Posterior vena cava (tissue), 2 donors: ENCODE measurements at regions of chr20 and their contacts with region 1.

Region 1: DNA sequence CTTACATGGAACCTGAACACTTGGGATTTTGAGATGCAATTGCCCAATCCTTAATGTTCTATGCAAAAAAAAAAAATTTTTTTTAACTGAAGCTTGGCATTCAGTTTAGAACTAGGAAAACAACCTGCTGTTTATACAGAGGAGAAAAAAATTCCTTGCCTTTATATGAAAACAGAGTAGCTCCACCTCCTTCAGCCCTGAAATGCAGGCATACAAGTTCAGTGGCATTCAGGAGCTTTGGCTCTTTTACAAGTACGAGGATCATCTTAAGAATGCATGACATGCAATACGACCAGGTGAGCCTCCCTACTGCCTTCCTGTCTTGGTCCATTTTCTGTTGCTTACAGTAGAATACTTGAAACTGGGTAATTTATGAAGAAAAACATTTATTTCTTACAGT is 20.4 kb downstream of the PAX1 start:
- DNase-seq: no peak

Region 2: GRCh38 chr20:21693322-21693721 is 32.6 kb before region 1 on chr20:
- intact Hi-C with region 1: no loop called
- DNase-seq: no peak

Region 3: GRCh38 chr20:21705575-21706260 is 20.2 kb before region 1 on chr20 and contains the start of gene PAX1:
- intact Hi-C with region 1: loop called in 1 of 2 experiments (anchors 1 kb)
- DNase-seq: no peak
- total RNA-seq, gene PAX1: not detected

Region 4: GRCh38 chr20:21867353-21867752 is 141.5 kb after region 1 on chr20:
- intact Hi-C with region 1: no loop called
- DNase-seq: no peak